GM10248 (cell line): ENCODE measurements at regions of chr5 and their contacts with region 1.

Region 1: GRCh38 chr5:138503487-138504270 is 38.4 kb downstream of the EGR1 start:
- DNase-seq: peak; percentile 70
- CTCF ChIP-seq: peak; percentile 76

Region 2: DNA sequence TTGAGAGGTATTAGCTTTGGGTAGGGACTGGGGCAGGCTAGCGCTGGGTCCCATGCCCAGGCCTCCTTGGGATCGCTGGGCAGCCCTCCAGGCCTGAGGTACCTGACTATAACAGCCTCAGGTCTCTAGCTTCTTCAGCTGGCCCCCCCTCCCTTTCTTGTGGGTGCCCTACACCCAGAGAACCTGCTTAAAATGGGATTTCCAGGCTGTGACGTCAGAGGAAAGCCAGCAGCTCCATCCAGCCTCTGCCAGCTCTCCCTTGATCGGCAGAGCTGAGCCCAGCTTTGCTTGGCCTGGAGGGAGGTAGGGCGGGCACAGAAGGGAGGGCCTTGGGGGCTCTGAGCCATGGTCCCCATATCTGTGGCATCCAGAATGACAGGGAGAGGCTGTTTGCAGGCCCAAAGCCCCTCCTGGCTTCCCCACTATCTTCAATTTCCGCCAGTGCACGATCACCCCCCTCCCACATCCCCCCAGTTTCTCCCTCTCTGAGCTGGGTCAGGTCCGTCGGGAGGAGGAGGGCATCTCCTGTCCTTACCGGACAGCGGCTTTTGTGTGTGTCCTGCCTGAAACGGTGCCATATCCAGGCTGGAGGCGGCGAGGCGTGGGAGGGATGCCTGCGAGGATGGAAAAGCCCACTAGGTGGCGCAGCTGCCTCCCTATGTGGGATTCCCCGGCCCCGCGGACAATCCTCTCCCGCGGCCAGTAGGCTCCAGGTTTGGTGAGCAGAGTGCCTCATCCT is 54.0 kb before region 1 on chr5:
- CTCF ChIA-PET with region 1: interaction called, 115 read pairs
- POLR2A ChIA-PET with region 1: interaction called, 3 read pairs
- DNase-seq: peak; percentile 95
- CTCF ChIP-seq: peak; percentile 83

Region 3: DNA sequence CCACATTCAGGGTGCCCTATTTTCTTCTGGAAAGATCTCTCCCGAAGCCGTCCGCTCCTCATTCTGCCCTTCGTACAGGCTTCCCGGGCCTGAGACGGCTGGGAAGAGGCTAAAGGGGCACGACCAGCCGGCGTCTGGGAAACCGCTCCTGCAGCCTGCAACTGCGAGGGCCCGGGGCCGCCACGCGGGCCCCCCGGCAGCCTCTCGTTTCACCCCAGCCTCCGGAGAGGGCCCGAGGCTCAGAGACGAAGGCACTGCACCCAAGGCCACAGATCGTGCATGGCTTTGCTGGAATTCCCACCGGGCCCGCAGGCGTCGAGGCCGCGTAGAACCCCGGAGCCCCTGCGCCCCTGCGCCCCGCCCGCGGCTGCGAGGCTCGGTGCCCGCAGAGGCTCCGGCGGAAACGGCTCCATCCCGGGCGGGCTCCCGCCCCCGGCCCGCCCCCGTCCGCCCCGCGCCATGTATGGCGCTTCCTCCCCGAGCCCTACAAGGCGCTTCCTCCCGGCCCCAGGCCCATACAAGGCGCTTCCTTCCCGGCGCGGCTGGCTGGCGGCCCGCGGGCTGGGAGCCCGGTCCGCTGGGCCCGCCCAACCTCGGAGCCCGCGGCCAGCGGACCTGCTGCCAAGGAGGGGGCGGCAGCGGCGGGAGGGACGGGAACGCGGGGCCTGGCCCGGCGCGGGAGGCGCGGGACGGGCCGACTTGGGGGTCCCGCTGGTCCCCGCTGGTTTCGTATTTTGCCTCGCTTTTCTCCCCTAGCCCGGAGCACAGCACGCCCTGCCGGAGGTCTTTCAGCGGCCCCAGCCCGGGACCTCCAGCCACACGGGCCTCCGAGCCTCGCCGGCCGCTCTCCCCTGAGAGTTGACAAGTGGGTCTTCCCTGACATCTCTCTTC is 11.8 kb before region 1 on chr5:
- CTCF ChIA-PET with region 1: interaction called, 25 read pairs
- POLR2A ChIA-PET with region 1: no interaction called
- DNase-seq: peak; percentile 96
- CTCF ChIP-seq: no peak

Region 4: DNA sequence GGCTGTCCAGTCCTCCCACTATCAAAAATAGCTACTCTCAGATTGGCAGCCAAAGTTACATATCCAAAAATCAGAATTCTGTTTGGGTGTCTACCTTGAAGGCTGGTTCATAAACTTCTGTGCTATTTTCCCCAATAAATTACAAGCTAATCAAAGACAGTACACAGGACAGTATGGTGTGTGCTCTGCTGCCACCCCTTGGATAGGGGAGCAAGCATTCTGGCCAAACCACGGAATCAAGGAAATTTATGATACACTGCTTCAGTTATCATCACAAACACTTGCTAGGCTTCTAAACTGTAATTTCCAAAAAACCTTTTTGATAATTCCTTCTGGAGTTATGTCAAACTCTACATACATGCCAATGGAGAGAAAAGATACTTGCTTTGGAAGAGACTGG is 23.5 kb after region 1 on chr5:
- CTCF ChIA-PET with region 1: interaction called, 20 read pairs
- POLR2A ChIA-PET with region 1: interaction called, 3 read pairs
- DNase-seq: no peak
- CTCF ChIP-seq: no peak

Region 5: GRCh38 chr5:138542956-138543729 is 39.5 kb after region 1 on chr5 and contains the start of gene ETF1:
- CTCF ChIA-PET with region 1: interaction called, 10 read pairs
- POLR2A ChIA-PET with region 1: interaction called, 5 read pairs
- DNase-seq: peak; percentile 99
- CTCF ChIP-seq: no peak